CD8-positive, alpha-beta T cell (primary cell): ENCODE measurements at regions of chr2 and their contacts with region 1.

Region 1: DNA sequence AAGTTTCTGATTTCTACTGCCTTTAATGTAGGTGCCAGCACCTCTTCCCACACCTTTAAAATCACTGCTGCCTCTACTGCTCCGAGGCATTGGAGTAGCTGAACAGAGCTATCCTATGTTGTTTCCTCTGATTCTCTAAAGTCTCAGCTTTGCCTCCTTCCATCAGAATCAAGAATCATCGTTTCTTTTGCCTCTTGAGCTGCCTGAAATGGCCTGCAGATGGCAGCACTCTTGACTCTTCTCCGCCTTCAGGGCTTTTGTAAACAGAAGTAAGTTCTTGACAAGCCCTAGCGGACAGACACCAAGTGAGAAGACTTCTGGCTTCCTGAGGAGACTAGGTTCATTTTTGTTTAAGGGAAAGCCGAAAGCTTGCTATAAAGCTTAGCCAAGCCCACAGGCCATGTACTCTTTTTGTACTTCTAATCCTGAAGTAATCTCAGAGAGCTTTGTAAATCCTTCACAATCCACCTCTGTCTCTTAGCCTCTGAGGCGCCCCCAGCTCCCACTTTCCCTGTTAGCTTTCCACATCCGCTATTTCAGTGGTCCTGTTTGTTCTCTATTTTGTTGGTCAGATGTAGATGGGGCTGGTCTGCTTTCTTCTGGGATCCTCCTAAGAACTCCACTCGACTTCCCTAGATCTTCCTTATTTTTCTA is 48.4 kb downstream of the GTF3C3 start:
- DNase-seq: peak; percentile 30 to 73 (median 54)
- ATAC-seq: peak; percentile 93
- H3K4me3 ChIP-seq: no peak overlapping the region
- H3K4me3 Mint-ChIP-seq: no peak overlapping the region
- H3K27ac ChIP-seq: no peak overlapping the region
- H3K27ac Mint-ChIP-seq: peak overlapping the region; percentile 14
- H3K4me1 ChIP-seq: peaks cover 3% of the 10 kb centered on the region
- H3K4me1 Mint-ChIP-seq: peaks cover 11% of the 10 kb centered on the region
- H3K27me3 ChIP-seq: no peaks in the 10 kb centered on the region
- H3K27me3 Mint-ChIP-seq: no peaks in the 10 kb centered on the region
- CTCF ChIP-seq: peak; percentile 67

Region 2: DNA sequence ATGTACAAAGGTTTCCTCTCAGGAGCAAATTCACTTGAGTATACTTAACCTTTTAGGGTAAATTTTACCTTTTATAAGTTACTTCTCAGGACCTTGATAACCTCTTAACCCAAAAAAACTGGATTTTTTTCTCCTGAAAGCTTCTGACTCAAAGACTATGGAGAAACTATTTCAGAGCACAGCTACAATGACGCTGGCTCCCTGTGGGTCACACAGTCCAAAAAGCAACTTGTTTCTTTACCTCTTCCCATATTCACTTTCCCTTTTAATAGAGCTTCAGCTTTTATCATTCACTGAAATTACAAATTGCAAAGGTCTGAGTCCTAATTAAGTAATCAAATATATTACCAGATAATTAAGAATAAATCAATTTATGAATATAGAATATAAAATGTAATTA is 16.0 kb after region 1 on chr2:
- CTCF ChIA-PET with region 1: interaction called, 21 read pairs
- POLR2A ChIA-PET with region 1: no interaction called
- intact Hi-C with region 1: no loop called
- DNase-seq: no peak
- ATAC-seq: no peak
- H3K4me3 ChIP-seq: no peak overlapping the region
- H3K4me3 Mint-ChIP-seq: no peak overlapping the region
- H3K27ac ChIP-seq: no peak overlapping the region
- H3K27ac Mint-ChIP-seq: no peak overlapping the region
- H3K4me1 ChIP-seq: no peaks in the 10 kb centered on the region
- H3K4me1 Mint-ChIP-seq: no peaks in the 10 kb centered on the region
- H3K27me3 ChIP-seq: no peaks in the 10 kb centered on the region
- H3K27me3 Mint-ChIP-seq: no peaks in the 10 kb centered on the region
- CTCF ChIP-seq: no peak